K562 (cell line): ENCODE measurements at regions of chr16 and their contacts with region 1.

Region 1: GRCh38 chr16:4802659-4803287 is 340 bp upstream of the ROGDI start:
- DNase-seq: peak; percentile 94 to 98 (median 96)
- ATAC-seq: peak; percentile 96
- H3K4me3 ChIP-seq: peak overlapping the region; percentile 89
- H3K27ac ChIP-seq: peak overlapping the region; percentile 78
- H3K4me1 ChIP-seq: peaks cover 35 to 65% of the 10 kb centered on the region in 2 experiments
- H3K27me3 ChIP-seq: no peaks in the 10 kb centered on the region
- CTCF ChIP-seq: no peak
- EP300 ChIP-seq: no peak
- POLR2A ChIP-seq: peak; percentile 62
- RAD21 ChIP-seq: no peak

Region 2: DNA sequence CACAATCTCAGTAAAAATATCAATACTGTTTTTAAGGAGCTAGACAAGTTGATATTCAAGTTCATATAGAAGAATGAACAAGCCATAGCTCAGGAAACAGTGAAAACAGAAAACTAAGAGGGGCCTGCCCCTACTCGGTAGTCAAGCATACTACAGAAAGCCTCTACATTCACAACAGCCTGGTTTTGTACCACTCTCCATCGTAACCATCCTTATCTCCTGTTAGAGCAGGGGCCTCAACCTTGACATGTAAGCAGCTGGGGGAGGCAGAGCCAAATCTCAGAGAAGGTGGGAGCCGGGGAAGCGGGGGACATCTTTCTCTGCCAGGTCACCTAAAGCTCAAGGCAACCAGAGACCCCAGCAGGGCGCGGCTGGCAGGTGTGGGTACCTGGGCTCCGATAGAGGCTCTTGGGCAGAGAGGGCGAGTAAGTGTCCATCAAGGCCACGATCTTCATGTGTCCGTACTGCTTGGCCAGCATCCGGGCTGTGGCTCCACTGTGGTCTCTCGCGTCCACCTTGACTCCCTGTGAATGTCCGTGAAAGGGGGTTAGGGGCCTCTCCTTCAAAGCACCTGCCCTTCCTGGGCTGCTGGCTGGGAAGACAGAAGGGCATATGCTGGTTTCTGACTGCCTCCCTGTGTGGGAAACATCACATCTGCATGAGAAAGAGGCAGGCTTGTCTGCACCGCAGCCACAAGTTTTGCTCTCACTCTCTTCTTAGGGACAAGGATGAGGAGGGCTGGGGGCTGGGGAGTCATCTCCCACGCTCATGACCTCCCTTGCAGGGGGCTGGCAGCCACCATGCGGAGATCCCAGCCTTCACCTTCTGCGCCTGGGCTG is 88.9 kb before region 1 on chr16:
- CTCF ChIA-PET with region 1: no interaction called
- POLR2A ChIA-PET with region 1: interaction called, 3 read pairs
- in situ Hi-C with region 1: no loop called
- intact Hi-C with region 1: loop called (anchors 5 kb)
- DNase-seq: no peak
- ATAC-seq: no peak
- H3K4me3 ChIP-seq: no peak overlapping the region
- H3K27ac ChIP-seq: no peak overlapping the region
- H3K4me1 ChIP-seq: no peaks in the 10 kb centered on the region
- H3K27me3 ChIP-seq: no peaks in the 10 kb centered on the region
- CTCF ChIP-seq: no peak
- EP300 ChIP-seq: no peak
- POLR2A ChIP-seq: no peak
- RAD21 ChIP-seq: no peak

Region 3: GRCh38 chr16:4766874-4767628 is 35.7 kb before region 1 on chr16 and contains the start of gene ZNF500:
- CTCF ChIA-PET with region 1: no interaction called
- POLR2A ChIA-PET with region 1: interaction called, 4 read pairs
- in situ Hi-C with region 1: no loop called
- intact Hi-C with region 1: loop called (anchors 2 kb)
- DNase-seq: peak; percentile 95 to 99 (median 96)
- ATAC-seq: peak; percentile 95
- H3K4me3 ChIP-seq: peak within 1 kb of the TSS; percentile 94
- H3K27ac ChIP-seq: peak within 1 kb of the TSS; percentile 84
- H3K4me1 ChIP-seq: peaks cover 21 to 49% of the 10 kb centered on the region in 2 experiments
- H3K27me3 ChIP-seq: no peaks in the 10 kb centered on the region
- CTCF ChIP-seq: no peak
- EP300 ChIP-seq: no peak
- POLR2A ChIP-seq: peak; percentile 85
- RAD21 ChIP-seq: no peak
- polyA plus RNA-seq, gene ZNF500: 0.80 to 0.84 TPM

Region 4: GRCh38 chr16:4924593-4925378 is 122.0 kb after region 1 on chr16:
- CTCF ChIA-PET with region 1: no interaction called
- POLR2A ChIA-PET with region 1: no interaction called
- in situ Hi-C with region 1: no loop called
- intact Hi-C with region 1: no loop called
- DNase-seq: no peak
- ATAC-seq: peak; percentile 55; the same call in 1 of the 3 replicates
- H3K4me3 ChIP-seq: no peak overlapping the region
- H3K27ac ChIP-seq: no peak overlapping the region
- H3K4me1 ChIP-seq: peaks cover 0 to 5% of the 10 kb centered on the region in 2 experiments; a peak in 2 of 5 replicates
- H3K27me3 ChIP-seq: peaks cover 21 to 52% of the 10 kb centered on the region in 2 experiments
- CTCF ChIP-seq: no peak
- EP300 ChIP-seq: no peak
- POLR2A ChIP-seq: no peak
- RAD21 ChIP-seq: no peak